ENCODE measurements at regions of chr13 and their contacts with region 1.

Region 1: GRCh38 chr13:85806553-85807175 is 7.4 kb upstream of the SLITRK6 start:
- DNase-seq: peak; percentile 72
- ATAC-seq: peak; percentile 85
- H3K4me3 ChIP-seq: no peak overlapping the region
- H3K27ac ChIP-seq: no peak overlapping the region
- H3K4me1 ChIP-seq: peaks cover 19% of the 10 kb centered on the region
- H3K27me3 ChIP-seq: no peaks in the 10 kb centered on the region
- CTCF ChIP-seq: peak; percentile 73

Region 2: GRCh38 chr13:84896128-84896527 is 910.5 kb before region 1 on chr13:
- CTCF ChIA-PET with region 1: no interaction called
- POLR2A ChIA-PET with region 1: no interaction called
- intact Hi-C with region 1: loop called (anchors 2 kb)
- DNase-seq: peak; percentile 63
- ATAC-seq: peak; percentile 54
- H3K4me3 ChIP-seq: no peak overlapping the region
- H3K27ac ChIP-seq: no peak overlapping the region
- H3K4me1 ChIP-seq: no peaks in the 10 kb centered on the region
- H3K27me3 ChIP-seq: no peaks in the 10 kb centered on the region
- CTCF ChIP-seq: peak; percentile 74

Region 3: DNA sequence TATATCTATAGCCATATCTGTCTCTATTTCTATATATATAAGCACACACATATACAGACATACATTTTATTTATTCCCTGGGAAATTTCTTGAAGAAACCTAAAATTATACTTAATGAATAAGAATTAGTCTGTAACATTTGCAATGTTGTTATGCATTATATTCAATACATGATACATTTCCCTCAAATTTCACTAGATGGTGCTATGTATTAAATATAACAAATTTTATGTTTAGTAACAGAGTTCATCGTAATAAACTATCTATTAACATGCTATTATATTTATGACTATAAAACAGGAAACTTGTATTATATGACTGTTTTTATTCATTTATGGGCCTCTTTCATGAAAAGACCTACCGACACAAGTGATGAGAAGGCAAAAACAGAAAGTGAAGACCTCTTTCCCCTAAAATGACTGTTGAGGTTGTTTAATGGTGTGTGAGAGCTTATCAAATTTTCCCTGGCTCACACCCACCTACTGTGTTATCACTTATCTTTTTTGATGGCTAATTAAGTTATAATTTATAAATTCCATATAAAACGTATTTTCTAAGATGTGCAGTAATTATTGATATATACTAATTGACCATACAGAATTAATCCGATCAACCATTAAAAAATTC is 889.3 kb before region 1 on chr13:
- CTCF ChIA-PET with region 1: no interaction called
- POLR2A ChIA-PET with region 1: no interaction called
- intact Hi-C with region 1: loop called (anchors 1 kb)
- DNase-seq: peak; percentile 60
- ATAC-seq: peak; percentile 50; the same call in 1 of the 2 replicates
- H3K4me3 ChIP-seq: no peak overlapping the region
- H3K27ac ChIP-seq: no peak overlapping the region
- H3K4me1 ChIP-seq: no peaks in the 10 kb centered on the region
- H3K27me3 ChIP-seq: no peaks in the 10 kb centered on the region
- CTCF ChIP-seq: peak; percentile 58

Region 4: DNA sequence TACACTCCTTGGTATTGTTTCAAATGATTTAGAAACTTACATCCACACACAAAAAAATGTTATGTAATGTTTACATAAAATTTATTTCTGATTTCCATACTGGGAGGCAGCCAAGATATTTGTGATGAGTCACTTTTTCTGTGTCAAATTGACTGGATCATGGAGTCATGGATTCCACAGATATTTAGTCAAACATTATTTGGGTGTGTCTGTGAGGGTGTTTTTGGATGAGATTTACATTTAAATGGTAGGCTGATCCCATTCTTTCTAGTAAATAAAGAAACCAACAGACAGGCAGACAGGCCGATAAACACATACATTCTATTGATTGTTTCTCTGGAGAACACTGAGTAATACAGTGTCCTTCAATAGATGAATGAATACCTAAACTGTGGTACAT is 570.2 kb before region 1 on chr13:
- CTCF ChIA-PET with region 1: no interaction called
- POLR2A ChIA-PET with region 1: no interaction called
- intact Hi-C with region 1: loop called (anchors 10 kb)
- DNase-seq: peak; percentile 91
- ATAC-seq: peak; percentile 83
- H3K4me3 ChIP-seq: peak overlapping the region; percentile 60
- H3K27ac ChIP-seq: peak overlapping the region; percentile 47
- H3K4me1 ChIP-seq: peaks cover 25% of the 10 kb centered on the region
- H3K27me3 ChIP-seq: no peaks in the 10 kb centered on the region
- CTCF ChIP-seq: no peak

Region 5: GRCh38 chr13:85503790-85504189 is 302.9 kb before region 1 on chr13:
- CTCF ChIA-PET with region 1: no interaction called
- POLR2A ChIA-PET with region 1: no interaction called
- intact Hi-C with region 1: loop called (anchors 2 kb)
- DNase-seq: peak; percentile 92
- ATAC-seq: peak; percentile 82
- H3K4me3 ChIP-seq: no peak overlapping the region
- H3K27ac ChIP-seq: peak overlapping the region; percentile 74
- H3K4me1 ChIP-seq: peaks cover 55% of the 10 kb centered on the region
- H3K27me3 ChIP-seq: no peaks in the 10 kb centered on the region
- CTCF ChIP-seq: no peak

Region 6: GRCh38 chr13:85616275-85616674 is 190.4 kb before region 1 on chr13:
- CTCF ChIA-PET with region 1: no interaction called
- POLR2A ChIA-PET with region 1: no interaction called
- intact Hi-C with region 1: no loop called
- DNase-seq: peak; percentile 77
- ATAC-seq: peak; percentile 99
- H3K4me3 ChIP-seq: no peak overlapping the region
- H3K27ac ChIP-seq: peak overlapping the region; percentile 66
- H3K4me1 ChIP-seq: peaks cover 9% of the 10 kb centered on the region
- H3K27me3 ChIP-seq: no peaks in the 10 kb centered on the region
- CTCF ChIP-seq: no peak

Measured in PC-3 (cell line).